Gastrocnemius medialis (tissue), 4 donors: ENCODE measurements at regions of chr5 and their contacts with region 1.

Region 1: GRCh38 chr5:38441453-38442246 is 114.8 kb downstream of the LIFR start:
- DNase-seq: peak; percentile 78 to 88
- ATAC-seq: peak; percentile 84 to 85
- H3K4me3 ChIP-seq: no peak overlapping the region
- H3K27ac ChIP-seq: peak overlapping the region in 2 of 4 donors; percentile 35 to 39
- H3K4me1 ChIP-seq: peaks cover 6 to 9% of the 10 kb centered on the region in 2 donors
- H3K27me3 ChIP-seq: no peaks in the 10 kb centered on the region
- CTCF ChIP-seq: peak; percentile 95 to 98 (median 96)
- POLR2A ChIP-seq: no peak

Region 2: DNA sequence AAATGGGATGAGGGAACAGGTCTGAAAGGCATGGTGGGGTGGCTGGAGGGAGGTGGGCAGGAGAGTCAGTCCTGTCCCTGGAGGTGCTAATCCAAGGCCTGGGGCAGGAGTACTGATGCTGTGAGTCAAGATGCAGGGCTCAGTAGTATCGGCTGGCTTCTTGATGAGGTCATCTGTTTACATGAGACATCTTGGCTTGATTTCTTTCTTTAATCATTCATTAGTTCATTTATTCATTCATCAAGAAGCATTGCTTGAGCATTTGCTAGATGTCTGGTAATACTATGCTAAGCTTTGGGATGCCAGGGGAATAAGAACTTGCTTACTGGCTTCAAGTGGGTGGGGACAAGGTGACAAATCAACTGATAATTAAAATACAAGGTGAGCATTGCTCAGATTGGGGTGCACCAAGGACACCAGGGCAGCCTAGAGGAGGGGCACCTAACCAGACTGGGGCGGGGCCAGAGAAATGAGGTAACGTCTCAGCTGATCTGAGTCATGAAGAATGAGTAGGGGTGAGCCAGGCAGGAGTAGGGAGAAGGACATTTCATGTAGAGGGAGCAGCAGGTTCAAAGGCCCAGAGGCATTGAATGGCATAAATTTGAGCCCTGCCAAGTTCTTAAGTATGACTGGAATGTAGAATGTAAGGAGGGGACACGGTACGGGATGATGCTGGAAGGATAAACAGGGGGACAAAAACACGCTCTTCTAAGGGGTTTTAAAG is 94.4 kb before region 1 on chr5:
- in situ Hi-C with region 1: no loop called
- intact Hi-C with region 1: no loop called
- DNase-seq: no peak
- ATAC-seq: no peak
- H3K4me3 ChIP-seq: no peak overlapping the region
- H3K27ac ChIP-seq: no peak overlapping the region
- H3K4me1 ChIP-seq: no peaks in the 10 kb centered on the region
- H3K27me3 ChIP-seq: no peaks in the 10 kb centered on the region
- CTCF ChIP-seq: no peak
- POLR2A ChIP-seq: no peak

Region 3: DNA sequence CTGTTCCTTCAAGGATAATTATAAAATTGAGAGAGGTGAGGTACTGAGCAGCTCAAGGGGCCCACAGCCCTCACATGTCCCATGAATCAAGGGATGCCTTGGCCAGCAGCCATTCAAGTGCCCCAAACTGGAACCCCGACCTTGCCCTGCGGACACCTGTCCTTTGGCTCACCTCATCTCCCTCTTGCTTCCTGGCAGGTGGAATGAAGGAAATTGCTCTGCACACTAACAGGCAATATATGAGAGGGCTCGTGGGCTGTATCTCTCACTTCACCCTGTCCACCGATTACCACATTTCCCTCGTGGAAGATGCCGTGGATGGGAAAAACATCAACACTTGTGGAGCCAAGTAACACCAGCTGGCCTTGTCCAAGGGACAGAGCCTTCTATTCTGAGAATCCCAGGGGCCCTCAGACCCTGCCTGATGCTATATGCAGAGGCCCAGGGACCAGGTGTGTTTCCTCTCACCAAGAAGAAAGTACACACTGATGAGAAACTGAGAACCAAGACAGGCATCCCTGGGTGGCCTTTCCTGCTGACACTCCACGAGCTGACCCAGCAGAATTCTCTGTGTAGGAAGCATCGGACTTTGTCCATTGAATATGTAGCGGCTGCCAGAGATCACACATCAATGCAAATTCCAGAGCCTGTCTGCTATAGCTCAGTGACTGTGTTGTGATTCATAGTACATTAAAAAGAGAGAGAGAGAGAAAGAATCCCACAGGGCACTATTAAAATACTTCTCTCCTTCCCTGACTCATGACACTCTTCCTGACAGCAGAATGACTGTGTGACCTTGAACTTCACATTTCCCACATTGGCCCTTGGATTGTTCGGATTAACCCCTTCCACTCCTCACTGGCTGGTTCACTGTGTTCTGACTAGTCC is 22.2 kb after region 1 on chr5:
- in situ Hi-C with region 1: no loop called
- intact Hi-C with region 1: loop called (anchors 1 kb)
- DNase-seq: peak in 1 of 2 donors; percentile 56
- ATAC-seq: peak; percentile 7 to 12
- H3K4me3 ChIP-seq: no peak overlapping the region
- H3K27ac ChIP-seq: peak overlapping the region; percentile 95 to 99 (median 97)
- H3K4me1 ChIP-seq: peaks cover 66 to 67% of the 10 kb centered on the region in 2 donors
- H3K27me3 ChIP-seq: no peaks in the 10 kb centered on the region
- CTCF ChIP-seq: no peak
- POLR2A ChIP-seq: no peak

Region 4: GRCh38 chr5:38497946-38498345 is 56.3 kb after region 1 on chr5:
- in situ Hi-C with region 1: no loop called
- intact Hi-C with region 1: loop called (anchors 5 kb)
- DNase-seq: no peak
- ATAC-seq: peak in 1 of 2 donors; percentile 55
- H3K4me3 ChIP-seq: no peak overlapping the region
- H3K27ac ChIP-seq: no peak overlapping the region
- H3K4me1 ChIP-seq: no peaks in the 10 kb centered on the region
- H3K27me3 ChIP-seq: no peaks in the 10 kb centered on the region
- CTCF ChIP-seq: no peak
- POLR2A ChIP-seq: no peak

Region 5: DNA sequence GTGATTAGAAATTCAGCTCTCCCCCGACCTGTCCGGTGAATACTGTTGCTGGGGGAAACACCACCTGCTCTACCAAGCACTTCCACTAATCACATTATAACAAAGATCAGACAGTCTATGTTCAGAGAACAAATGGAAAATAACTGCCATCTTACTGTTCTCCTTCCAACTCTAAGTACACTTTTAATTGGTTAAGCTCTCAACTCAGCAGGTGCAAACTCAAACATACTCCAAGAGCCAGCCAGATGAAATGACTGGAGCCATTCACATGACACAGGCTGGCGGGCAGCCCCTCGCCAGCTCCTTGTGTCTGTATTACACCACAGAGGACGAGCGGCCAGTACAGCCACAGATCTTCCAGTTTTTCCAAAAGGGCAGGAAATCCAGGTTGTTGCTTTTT is 98.7 kb after region 1 on chr5:
- in situ Hi-C with region 1: loop called in 3 of 4 experiments (anchors 10 kb)
- intact Hi-C with region 1: loop called (anchors 2 kb)
- DNase-seq: peak; percentile 81 to 90
- ATAC-seq: peak; percentile 87 to 94
- H3K4me3 ChIP-seq: peak overlapping the region; percentile 5 to 19 (median 11)
- H3K27ac ChIP-seq: peak overlapping the region; percentile 79 to 87 (median 85)
- H3K4me1 ChIP-seq: peaks cover 91 to 94% of the 10 kb centered on the region in 2 donors
- H3K27me3 ChIP-seq: no peaks in the 10 kb centered on the region
- CTCF ChIP-seq: no peak
- POLR2A ChIP-seq: peak; percentile 24 to 45

Region 6: DNA sequence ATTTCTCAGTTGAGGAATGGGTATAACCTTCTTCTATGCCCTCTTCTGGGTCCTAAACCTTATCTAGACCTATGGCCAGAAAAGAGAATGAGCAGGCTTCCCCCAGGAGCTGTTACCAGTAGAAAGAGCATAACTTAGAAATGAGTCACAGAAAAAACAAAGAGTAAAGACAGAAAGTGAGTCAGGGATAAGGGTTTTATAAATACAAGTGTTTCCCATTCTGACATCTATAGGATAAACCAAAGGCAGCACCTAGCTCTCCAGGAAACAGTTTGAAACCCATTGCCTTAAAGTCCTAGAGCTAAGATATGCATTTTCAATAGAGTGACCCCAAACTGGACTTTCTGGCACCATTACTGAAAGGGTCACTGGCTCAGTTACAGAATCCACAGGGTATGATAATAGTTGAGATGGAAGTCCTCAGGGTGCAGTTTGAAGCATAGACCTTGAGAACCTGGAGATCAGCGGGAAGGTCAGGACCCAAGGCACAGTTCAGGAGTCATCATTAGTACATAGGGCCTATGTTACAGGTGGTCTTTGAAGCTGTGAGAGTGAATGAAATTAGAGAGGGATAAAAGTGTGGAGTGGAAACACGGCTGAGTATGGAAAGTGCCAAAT is 157.5 kb after region 1 on chr5:
- in situ Hi-C with region 1: no loop called
- intact Hi-C with region 1: loop called (anchors 5 kb)
- DNase-seq: no peak
- ATAC-seq: no peak
- H3K4me3 ChIP-seq: no peak overlapping the region
- H3K27ac ChIP-seq: peak overlapping the region in 3 of 4 donors; percentile 34 to 85 (median 82)
- H3K4me1 ChIP-seq: peaks cover 35 to 57% of the 10 kb centered on the region in 2 donors
- H3K27me3 ChIP-seq: no peaks in the 10 kb centered on the region
- CTCF ChIP-seq: no peak
- POLR2A ChIP-seq: no peak

Region 7: GRCh38 chr5:38809388-38810359 is 368.0 kb after region 1 on chr5:
- in situ Hi-C with region 1: loop called (anchors 5 to 10 kb)
- intact Hi-C with region 1: loop called (anchors 2 kb)
- DNase-seq: peak; percentile 67 to 72
- ATAC-seq: peak; percentile 78 to 91
- H3K4me3 ChIP-seq: no peak overlapping the region
- H3K27ac ChIP-seq: peak overlapping the region; percentile 36 to 47 (median 44)
- H3K4me1 ChIP-seq: peaks cover 9 to 22% of the 10 kb centered on the region in 2 donors
- H3K27me3 ChIP-seq: no peaks in the 10 kb centered on the region
- CTCF ChIP-seq: peak; percentile 80 to 89 (median 81)
- POLR2A ChIP-seq: no peak